GM13976 (cell line): ENCODE measurements at regions of chr1 and their contacts with region 1.

Region 1: DNA sequence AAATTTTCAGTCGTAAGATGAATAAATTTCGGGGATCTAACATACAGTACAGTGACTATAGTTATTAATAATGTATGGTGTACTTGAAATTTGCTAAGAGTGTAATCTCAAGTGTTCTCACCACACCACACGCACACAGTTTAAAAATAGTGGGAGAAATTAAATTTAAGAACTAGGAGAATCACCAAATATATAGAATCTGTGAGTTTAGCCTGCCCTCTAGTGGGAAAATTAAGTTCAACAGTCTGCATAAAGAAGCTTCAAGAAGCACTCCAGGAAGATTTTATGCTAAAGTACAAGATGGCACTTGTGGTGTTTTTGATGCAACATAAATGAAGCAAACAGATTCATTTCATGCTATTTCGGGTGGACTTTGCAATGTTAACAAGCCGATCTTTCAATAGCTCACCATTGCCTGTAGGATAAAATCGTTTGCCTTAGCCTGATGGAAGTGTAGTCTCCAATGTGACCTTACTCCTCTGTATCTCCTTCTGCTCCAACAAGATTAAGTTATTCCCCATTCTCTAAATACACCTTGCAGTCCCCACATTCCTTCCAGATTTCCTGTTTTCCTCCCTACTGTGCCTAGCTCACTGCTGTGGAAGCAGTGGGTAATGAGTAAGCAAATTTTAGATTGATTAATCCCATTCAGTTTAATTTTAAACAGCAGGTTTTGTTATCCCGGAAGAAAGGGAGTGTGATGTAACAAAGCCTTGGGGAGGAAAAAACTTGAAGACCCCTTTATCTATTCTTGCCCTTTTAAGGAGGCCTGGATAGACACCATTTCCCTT is 8.7 kb upstream of the PIK3C2B start:
- DNase-seq: no peak
- CTCF ChIP-seq: peak; percentile 46

Region 2: DNA sequence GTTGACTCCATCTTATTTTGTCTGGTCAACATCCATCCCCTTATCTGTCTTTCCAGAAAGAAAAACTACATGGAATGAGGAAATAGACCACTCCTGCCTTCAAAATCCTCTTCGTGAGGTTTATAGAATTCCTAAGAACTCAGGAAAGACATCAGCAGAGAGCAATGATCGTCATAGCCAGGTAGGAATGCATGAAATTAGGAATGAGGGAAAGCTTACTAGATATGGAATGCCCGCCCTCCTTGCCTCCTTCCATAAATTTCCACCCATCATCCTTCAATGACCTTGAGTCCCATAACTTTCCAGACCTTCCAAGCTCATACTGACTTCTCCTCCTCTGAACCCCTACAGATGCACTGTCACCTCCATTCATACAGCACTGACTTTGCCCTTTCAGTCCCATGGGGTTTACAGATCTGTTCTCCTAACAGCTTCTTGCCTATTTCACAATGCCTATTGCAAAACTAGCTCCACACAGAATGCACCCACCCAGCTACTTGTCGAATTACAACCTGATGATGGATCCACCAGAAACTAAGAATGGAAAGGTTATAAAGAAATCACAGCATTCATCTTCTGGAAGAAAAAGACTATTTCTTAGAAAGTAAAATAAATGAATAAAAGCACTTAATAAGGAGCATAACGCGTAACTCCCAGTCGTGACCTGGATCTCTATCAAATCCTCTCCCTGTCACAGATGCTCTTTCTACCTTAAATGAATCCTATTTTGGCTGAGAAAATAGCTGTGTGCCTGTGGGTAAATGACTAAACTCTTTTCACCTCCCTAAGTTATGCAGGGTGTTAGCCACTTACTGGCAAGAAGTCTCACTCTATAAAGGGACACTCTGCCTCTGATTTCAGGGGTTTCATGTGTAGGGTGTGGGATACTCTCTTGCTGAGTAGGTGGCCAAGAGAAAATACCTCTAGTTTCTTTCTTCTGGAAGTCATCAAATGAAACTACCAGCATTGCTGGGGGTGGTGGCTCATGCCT is 67.7 kb before region 1 on chr1:
- in situ Hi-C with region 1: no loop called
- DNase-seq: no peak
- CTCF ChIP-seq: no peak

Region 3: GRCh38 chr1:204446370-204447111 is 56.8 kb before region 1 on chr1:
- in situ Hi-C with region 1: loop called (anchors 5 kb)
- DNase-seq: peak; percentile 87
- CTCF ChIP-seq: peak; percentile 76